Stomach (tissue), 19 donors: ENCODE measurements at regions of chr2 and their contacts with region 1.

Region 1: GRCh38 chr2:231674587-231675338 is 33.6 kb upstream of the PTMA start:
- DNase-seq: peak; percentile 68 to 91
- H3K4me3 ChIP-seq: peak overlapping the region in 1 of 4 donors; percentile 6
- H3K27ac ChIP-seq: peak overlapping the region; percentile 82 to 95 (median 91)
- H3K4me1 ChIP-seq: peaks cover 54 to 69% (median 60%) of the 10 kb centered on the region in 4 donors
- H3K27me3 ChIP-seq: no peaks in the 10 kb centered on the region
- CTCF ChIP-seq: peak in 5 of 7 experiments; percentile 68 to 86 (median 75)
- EP300 ChIP-seq: no peak
- POLR2A ChIP-seq: no peak

Region 2: GRCh38 chr2:231612179-231613053 is 62.3 kb before region 1 on chr2:
- intact Hi-C with region 1: loop called (anchors 5 kb)
- DNase-seq: peak; percentile 95 to 97
- H3K4me3 ChIP-seq: peak overlapping the region in 1 of 4 donors; percentile 56
- H3K27ac ChIP-seq: peak overlapping the region; percentile 89 to 98 (median 96)
- H3K4me1 ChIP-seq: peaks cover 41 to 54% (median 46%) of the 10 kb centered on the region in 4 donors
- H3K27me3 ChIP-seq: peaks cover 0 to 14% (median 0%) of the 10 kb centered on the region in 3 donors
- CTCF ChIP-seq: peak in 6 of 7 experiments; percentile 75 to 99 (median 95)
- EP300 ChIP-seq: no peak
- POLR2A ChIP-seq: no peak

Region 3: GRCh38 chr2:231627384-231628120 is 47.2 kb before region 1 on chr2:
- intact Hi-C with region 1: no loop called
- DNase-seq: no peak
- H3K4me3 ChIP-seq: no peak overlapping the region
- H3K27ac ChIP-seq: peak overlapping the region in 4 of 5 donors; percentile 41 to 64 (median 50)
- H3K4me1 ChIP-seq: peaks cover 0 to 7% (median 0%) of the 10 kb centered on the region in 4 donors
- H3K27me3 ChIP-seq: no peaks in the 10 kb centered on the region
- CTCF ChIP-seq: no peak
- EP300 ChIP-seq: no peak
- POLR2A ChIP-seq: no peak

Region 4: GRCh38 chr2:231709981-231710798 is 35.4 kb after region 1 on chr2:
- intact Hi-C with region 1: loop called (anchors 5 kb)
- DNase-seq: peak; percentile 91 to 95
- H3K4me3 ChIP-seq: peak overlapping the region; percentile 82 to 97 (median 90)
- H3K27ac ChIP-seq: peak overlapping the region; percentile 96 to 100 (median 100)
- H3K4me1 ChIP-seq: peaks cover 32 to 56% (median 55%) of the 10 kb centered on the region in 4 donors
- H3K27me3 ChIP-seq: no peaks in the 10 kb centered on the region
- CTCF ChIP-seq: peak in 3 of 7 experiments; percentile 68 to 97 (median 79)
- EP300 ChIP-seq: no peak
- POLR2A ChIP-seq: peak in 1 of 4 donors; percentile 14

Region 5: GRCh38 chr2:231752061-231752460 is 77.3 kb after region 1 on chr2:
- intact Hi-C with region 1: no loop called
- DNase-seq: no peak
- H3K4me3 ChIP-seq: no peak overlapping the region
- H3K27ac ChIP-seq: no peak overlapping the region
- H3K4me1 ChIP-seq: no peaks in the 10 kb centered on the region
- H3K27me3 ChIP-seq: no peaks in the 10 kb centered on the region
- CTCF ChIP-seq: no peak
- EP300 ChIP-seq: no peak
- POLR2A ChIP-seq: no peak